PC-9 (cell line): ENCODE measurements at regions of chr10 and their contacts with region 1.

Region 1: GRCh38 chr10:21349912-21350286 is 175.6 kb downstream of the SKIDA1 start:
- DNase-seq: no peak
- H3K4me3 ChIP-seq: no peak overlapping the region
- H3K27ac ChIP-seq: peak overlapping the region; percentile 24
- H3K4me1 ChIP-seq: peaks cover 27% of the 10 kb centered on the region
- H3K27me3 ChIP-seq: no peaks in the 10 kb centered on the region
- CTCF ChIP-seq: no peak

Region 2: GRCh38 chr10:21604651-21605050 is 254.8 kb after region 1 on chr10:
- CTCF ChIA-PET with region 1: no interaction called
- POLR2A ChIA-PET with region 1: interaction called, 23 read pairs
- intact Hi-C with region 1: no loop called
- DNase-seq: no peak
- H3K4me3 ChIP-seq: no peak overlapping the region
- H3K27ac ChIP-seq: no peak overlapping the region
- H3K4me1 ChIP-seq: no peaks in the 10 kb centered on the region
- H3K27me3 ChIP-seq: no peaks in the 10 kb centered on the region
- CTCF ChIP-seq: no peak

Region 3: DNA sequence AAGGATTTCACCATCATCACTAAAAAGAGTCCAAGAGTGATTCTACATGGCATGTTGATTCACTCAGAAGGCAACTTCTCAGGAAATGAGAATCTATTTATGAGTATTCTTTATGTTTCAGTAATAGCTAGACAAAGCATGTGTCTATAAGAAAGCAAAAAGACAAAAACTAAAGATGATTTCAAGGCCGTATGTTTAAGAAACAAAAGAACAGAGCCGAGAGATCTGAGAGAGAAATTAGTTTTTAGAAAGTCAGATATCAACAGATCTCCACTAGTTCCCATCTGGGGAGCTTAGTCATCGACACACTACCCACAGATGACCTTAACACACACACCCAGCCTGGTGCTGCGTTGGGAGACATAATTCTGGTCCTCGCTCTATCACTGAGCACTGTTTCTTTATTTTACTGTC is 1343.5 kb after region 1 on chr10:
- CTCF ChIA-PET with region 1: no interaction called
- POLR2A ChIA-PET with region 1: interaction called, 10 read pairs
- intact Hi-C with region 1: no loop called
- DNase-seq: no peak
- H3K4me3 ChIP-seq: no peak overlapping the region
- H3K27ac ChIP-seq: no peak overlapping the region
- H3K4me1 ChIP-seq: peaks cover 38% of the 10 kb centered on the region
- H3K27me3 ChIP-seq: no peaks in the 10 kb centered on the region
- CTCF ChIP-seq: no peak